Stomach (tissue), 19 donors: ENCODE measurements at regions of chr22 and their contacts with region 1.

Region 1: DNA sequence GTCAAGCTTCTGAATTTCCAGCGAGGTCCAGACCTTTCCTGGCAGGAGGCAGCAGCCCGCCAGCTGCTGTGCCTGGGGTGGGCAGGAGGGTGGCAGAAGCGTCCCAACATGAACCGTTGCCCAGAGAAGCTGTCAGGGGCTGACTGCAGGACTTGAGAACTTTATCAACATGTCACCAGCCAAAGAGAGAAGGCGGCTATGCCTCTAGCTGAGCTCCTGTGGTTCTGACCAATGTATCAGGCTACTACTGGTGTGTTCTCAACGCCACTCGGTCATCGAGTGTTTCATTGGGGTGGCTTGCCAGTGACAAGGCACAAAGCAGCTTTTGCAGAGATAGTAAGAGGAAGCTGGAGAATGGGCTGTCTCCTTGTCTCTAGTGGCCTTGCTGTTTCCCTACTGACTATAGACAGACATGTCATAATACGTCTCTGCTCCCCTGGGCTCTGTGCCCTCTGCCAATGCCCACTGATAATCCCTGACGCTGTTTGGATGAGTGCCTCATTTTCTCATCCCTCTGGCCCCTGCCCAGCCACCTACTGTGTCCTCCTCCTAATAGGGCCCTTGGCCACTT is 17.6 kb upstream of the ASCC2 start:
- DNase-seq: no peak
- H3K4me3 ChIP-seq: no peak overlapping the region
- H3K27ac ChIP-seq: no peak overlapping the region
- H3K4me1 ChIP-seq: no peaks in the 10 kb centered on the region
- H3K27me3 ChIP-seq: no peaks in the 10 kb centered on the region
- CTCF ChIP-seq: no peak
- EP300 ChIP-seq: no peak
- POLR2A ChIP-seq: no peak

Region 2: GRCh38 chr22:29750559-29751538 is 104.8 kb before region 1 on chr22:
- intact Hi-C with region 1: loop called (anchors 10 kb)
- DNase-seq: no peak
- H3K4me3 ChIP-seq: no peak overlapping the region
- H3K27ac ChIP-seq: peak overlapping the region in 2 of 5 donors; percentile 47 to 51
- H3K4me1 ChIP-seq: no peaks in the 10 kb centered on the region
- H3K27me3 ChIP-seq: no peaks in the 10 kb centered on the region
- CTCF ChIP-seq: no peak
- EP300 ChIP-seq: no peak
- POLR2A ChIP-seq: no peak